Activated CD8-positive, alpha-beta T cell treated with anti-CD3 and anti-CD28 coated beads for 36 hours (primary cell): ENCODE measurements at regions of chr11 and their contacts with region 1.

Region 1: DNA sequence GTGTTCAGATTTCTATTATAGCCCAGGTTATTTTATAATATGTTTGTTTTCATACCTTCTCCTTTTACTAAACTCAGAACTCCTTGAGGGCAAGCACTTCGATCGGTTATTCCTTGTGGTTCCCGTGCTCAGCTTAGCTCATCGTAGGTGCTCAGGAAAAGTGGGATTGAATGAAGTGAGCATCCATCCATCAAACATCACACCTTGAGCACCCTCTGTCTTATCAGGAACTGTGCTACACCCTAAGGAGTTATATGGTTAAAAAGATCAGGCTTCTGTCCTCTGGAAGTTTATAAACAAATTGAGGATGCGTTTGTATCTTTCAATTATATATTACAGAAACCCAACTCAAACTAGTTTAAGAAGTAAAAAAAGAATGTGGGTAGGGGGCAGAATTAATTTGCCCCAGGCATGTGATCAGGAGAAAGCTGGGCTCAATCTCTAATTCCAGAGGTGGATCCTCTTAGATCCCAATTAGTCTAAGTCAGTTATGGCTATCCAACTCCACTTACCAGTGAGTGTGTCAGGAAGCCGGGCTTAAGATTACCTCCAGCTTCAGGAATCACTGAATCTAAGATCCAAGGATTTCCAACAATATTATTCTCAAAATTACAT is 59.9 kb upstream of the RRAS2 start:
- DNase-seq: peak; percentile 15
- ATAC-seq: no peak
- H3K4me3 Mint-ChIP-seq: no peak overlapping the region
- H3K27ac Mint-ChIP-seq: no peak overlapping the region
- H3K4me1 Mint-ChIP-seq: peaks cover 46% of the 10 kb centered on the region
- H3K27me3 Mint-ChIP-seq: no peaks in the 10 kb centered on the region
- CTCF ChIP-seq: peak; percentile 71

Region 2: GRCh38 chr11:13691286-13691899 is 727.5 kb before region 1 on chr11:
- CTCF ChIA-PET with region 1: no interaction called
- POLR2A ChIA-PET with region 1: no interaction called
- intact Hi-C with region 1: no loop called
- DNase-seq: no peak
- ATAC-seq: no peak
- H3K4me3 Mint-ChIP-seq: no peak overlapping the region
- H3K27ac Mint-ChIP-seq: no peak overlapping the region
- H3K4me1 Mint-ChIP-seq: peaks cover 11% of the 10 kb centered on the region
- H3K27me3 Mint-ChIP-seq: no peaks in the 10 kb centered on the region
- CTCF ChIP-seq: no peak

Region 3: DNA sequence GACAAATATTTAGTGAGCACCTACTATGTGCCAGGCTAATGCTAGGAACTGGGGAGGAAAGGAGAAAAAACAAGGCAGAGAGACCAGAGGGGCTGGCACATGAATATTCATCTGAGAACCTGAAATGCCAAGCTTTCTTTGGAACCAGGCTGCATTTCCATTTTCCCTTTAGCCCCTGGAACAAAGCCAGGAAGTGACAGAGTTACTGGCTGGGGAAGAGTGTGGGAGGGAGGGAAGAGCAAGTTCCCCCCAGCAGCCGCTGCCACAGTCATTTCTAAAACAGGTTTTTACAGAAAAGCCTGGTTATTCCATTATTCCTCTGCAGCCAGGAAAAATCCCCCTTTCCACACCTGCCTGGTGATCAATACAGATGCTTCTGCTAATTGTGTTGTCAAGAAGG is 359.4 kb before region 1 on chr11:
- CTCF ChIA-PET with region 1: no interaction called
- POLR2A ChIA-PET with region 1: no interaction called
- intact Hi-C with region 1: no loop called
- DNase-seq: no peak
- ATAC-seq: no peak
- H3K4me3 Mint-ChIP-seq: no peak overlapping the region
- H3K27ac Mint-ChIP-seq: no peak overlapping the region
- H3K4me1 Mint-ChIP-seq: peaks cover 10% of the 10 kb centered on the region
- H3K27me3 Mint-ChIP-seq: no peaks in the 10 kb centered on the region
- CTCF ChIP-seq: no peak

Region 4: GRCh38 chr11:14373931-14374646 is 44.8 kb before region 1 on chr11:
- CTCF ChIA-PET with region 1: interaction called, 10 read pairs
- POLR2A ChIA-PET with region 1: interaction called, 3 read pairs
- intact Hi-C with region 1: no loop called
- DNase-seq: no peak
- ATAC-seq: peak; percentile 17
- H3K4me3 Mint-ChIP-seq: no peak overlapping the region
- H3K27ac Mint-ChIP-seq: peak overlapping the region; percentile 21
- H3K4me1 Mint-ChIP-seq: peaks cover 63% of the 10 kb centered on the region
- H3K27me3 Mint-ChIP-seq: peaks cover 3% of the 10 kb centered on the region
- CTCF ChIP-seq: no peak

Region 5: DNA sequence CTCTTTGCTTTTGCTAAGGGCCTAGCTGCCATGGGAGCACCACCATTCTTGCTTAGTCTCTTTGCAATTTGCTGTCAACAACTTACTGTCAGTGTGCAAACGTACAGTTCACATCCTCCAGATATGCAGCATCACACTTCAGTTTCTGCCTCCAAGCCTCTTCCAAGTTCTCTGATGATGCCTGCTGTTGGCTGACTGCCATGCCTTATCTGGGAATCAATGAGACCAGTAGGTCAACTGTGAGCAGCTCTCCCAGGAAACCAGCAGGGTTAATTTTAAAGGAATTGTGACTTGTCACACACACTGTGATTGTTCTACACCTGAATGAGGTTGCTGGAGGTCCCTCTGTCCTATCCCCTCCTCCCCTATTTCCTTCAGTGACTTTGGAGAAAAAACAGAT is 24.7 kb after region 1 on chr11:
- CTCF ChIA-PET with region 1: interaction called, 11 read pairs
- POLR2A ChIA-PET with region 1: interaction called, 7 read pairs
- intact Hi-C with region 1: no loop called
- DNase-seq: no peak
- ATAC-seq: no peak
- H3K4me3 Mint-ChIP-seq: no peak overlapping the region
- H3K27ac Mint-ChIP-seq: no peak overlapping the region
- H3K4me1 Mint-ChIP-seq: peaks cover 56% of the 10 kb centered on the region
- H3K27me3 Mint-ChIP-seq: no peaks in the 10 kb centered on the region
- CTCF ChIP-seq: no peak